ENCODE measurements at regions of chr2 and their contacts with region 1.

Region 1: DNA sequence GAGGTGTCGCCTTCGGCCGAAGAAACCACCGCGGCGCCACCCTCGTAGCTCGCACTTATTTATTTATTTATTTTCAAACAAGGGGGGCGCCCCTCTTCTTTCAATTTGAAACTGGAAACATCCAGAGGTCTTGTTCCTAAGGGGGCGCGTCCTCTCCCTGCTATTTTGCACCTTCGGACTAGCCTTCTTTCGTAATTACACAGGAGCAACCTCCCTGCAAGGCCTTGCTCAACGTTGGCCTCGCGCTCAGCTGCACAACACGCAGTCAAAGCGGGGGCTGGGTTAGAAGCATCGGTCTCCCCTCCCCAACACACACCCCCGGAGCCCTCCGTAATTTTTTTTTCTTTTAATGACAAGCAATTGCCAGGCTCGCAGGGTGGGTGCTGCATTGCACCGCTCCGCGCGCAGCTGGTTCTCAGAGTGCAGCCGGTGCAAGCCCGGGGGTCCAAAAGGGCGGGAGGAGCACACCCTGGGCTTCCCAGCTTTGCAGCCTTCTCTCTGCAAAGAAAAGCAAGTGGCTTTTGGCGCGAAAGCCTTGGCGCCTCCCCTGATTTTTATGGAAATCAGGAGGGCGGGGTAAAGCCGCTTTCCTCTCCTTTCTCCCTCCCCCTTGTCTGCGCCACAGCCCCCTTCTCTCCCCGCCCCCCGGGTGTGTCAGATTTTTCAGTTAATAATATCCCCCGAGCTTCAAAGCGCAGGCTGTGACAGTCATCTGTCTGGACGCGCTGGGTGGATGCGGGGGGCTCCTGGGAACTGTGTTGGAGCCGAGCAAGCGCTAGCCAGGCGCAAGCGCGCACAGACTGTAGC is at the start of gene MYCN:
- DNase-seq: no peak
- total RNA-seq, gene MYCN: 0.43 TPM

Region 2: GRCh38 chr2:15844211-15844801 is 95.8 kb before region 1 on chr2:
- intact Hi-C with region 1: no loop called
- DNase-seq: no peak

Region 3: DNA sequence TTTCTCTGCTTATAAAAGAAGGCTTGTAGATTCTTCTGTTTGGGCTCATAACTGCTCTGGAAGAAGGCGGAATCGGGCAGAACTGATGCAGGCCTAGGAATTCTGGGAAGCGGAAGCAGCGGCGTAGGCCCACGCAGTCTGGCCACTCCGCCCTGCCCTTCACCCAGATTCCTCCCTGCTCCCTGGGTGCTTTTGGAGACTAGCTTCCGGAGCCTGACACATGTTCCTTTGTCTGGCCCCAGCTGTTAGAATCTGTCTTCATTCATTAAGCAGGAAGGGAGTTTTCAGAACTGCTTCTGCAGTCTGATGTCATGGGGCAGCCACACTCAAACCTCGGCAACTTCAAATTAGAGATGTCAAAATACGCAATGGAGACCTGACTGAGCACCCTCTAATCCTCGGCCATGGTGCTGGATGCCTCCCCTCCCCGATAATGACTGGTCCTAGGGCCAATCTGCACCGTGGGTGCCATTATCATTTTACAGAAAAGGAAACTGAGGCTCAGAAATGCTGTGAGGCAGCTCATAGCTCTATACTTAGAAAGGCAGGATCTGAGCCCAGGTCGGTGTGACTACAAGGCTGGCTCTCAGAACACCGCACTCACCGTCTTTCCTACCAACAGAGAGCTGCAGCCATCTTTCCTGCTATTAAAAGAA is 276.0 kb after region 1 on chr2:
- intact Hi-C with region 1: loop called (anchors 2 kb)
- DNase-seq: no peak

Region 4: GRCh38 chr2:16281451-16282336 is 341.6 kb after region 1 on chr2:
- intact Hi-C with region 1: loop called (anchors 2 kb)
- DNase-seq: no peak

Region 5: DNA sequence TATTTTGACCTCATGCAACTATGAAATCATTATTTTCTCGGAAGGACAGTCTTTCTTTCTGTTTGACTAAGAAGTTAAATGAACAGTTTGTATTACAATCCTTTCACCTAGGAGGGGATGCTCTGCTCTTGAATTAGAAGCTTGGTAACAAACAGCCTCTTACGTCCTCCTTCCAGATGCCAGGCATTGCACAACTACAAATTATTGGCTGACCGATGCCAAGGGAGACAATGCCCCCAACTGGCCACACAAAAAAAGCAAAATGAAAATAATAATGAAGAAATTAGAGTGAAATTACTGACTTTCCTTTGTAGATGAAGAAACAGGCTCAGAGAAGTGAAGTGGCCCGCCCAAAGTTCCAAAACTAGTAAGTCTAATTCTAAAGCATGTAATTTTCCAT is 547.6 kb after region 1 on chr2:
- intact Hi-C with region 1: loop called (anchors 1 kb)
- DNase-seq: no peak

Region 6: GRCh38 chr2:16507655-16508489 is 567.8 kb after region 1 on chr2:
- intact Hi-C with region 1: loop called (anchors 5 kb)
- DNase-seq: no peak

Region 7: DNA sequence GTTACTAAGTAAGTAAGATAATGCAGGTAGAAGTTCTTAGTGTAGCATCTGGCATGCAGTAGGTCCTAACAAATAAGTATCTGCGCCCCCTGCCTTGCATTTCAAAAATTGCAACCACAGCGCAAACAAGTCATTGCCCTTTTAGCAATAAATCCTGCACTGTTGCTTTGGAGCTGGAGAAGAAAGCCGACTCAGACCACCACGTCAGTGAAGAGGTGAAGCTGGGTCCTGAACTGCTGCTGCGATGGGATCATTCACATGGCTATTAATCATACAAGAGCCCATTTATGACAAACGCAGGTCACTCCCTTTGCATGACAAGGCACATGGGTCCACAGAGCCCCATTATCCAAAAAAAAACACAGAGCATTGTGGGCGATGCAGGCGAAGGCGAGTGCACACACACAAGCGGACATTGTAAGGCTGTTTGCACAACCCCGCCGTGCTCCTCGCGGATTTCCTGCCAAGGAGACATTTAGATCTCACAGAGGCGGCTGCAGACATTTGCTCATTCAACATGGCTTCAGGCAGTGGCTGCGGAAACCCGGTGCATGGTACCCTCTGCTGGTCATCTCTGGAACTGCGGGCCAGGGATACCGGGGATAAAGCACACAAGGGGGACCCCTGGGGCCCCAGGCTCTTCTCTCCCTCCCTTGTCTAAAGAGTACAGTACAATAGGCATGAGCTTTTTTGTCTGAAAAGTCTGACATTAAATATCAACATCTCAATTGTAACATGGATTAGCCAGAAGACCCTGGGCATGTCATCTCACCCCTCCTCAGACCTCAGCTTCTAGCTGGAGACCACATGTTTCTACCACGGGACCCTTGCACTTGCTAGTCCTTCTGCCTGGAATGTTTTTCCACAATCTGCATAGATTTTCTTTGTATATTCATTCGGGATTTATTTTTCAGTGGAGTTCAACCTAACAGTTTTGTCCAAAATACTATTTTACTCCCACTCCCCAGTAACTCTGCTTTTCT is 668.9 kb after region 1 on chr2:
- intact Hi-C with region 1: loop called (anchors 2 kb)
- DNase-seq: peak; percentile 93

Region 8: DNA sequence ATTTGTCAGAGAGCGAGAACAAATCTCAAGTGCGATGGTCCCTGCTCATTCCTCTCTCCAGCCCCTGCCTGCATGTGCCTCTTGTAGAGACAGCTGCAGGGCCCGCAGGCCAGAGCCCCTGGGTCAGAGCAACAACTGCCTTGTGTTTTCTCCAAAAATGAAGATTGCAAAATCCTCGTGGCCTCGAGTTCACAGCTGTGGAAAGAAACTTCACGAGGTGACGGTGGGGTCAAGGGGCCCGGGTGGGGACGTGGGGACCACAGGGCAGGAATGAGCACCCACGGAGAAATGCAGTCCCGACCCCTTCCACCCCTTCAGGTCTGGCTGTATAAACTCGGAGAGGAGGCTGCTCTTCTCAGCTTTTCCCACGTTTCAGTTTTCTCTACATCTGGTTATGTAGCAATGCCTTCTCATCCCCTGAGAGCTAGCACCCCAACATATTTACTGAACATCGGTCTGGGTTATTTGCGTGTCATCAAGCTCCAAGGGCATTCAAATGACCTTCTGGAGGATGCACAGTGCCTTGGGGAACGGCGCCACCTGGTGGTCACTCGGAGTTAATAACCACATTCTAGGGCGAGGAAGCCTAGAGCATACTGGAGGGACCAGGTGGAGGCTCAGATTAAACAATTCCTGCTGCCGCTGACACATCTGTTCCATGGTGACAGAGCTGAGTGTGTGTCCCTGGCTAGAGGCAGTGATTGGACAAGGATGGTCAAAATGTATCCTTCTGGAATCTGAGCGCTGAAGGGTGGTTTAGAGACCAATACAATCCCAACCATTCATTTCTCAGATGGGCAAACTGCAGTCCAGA is 817.0 kb after region 1 on chr2:
- intact Hi-C with region 1: loop called (anchors 10 kb)
- DNase-seq: peak; percentile 91

Measured in cardiac septum (tissue), 1 donor.